Activated CD4-positive, alpha-beta memory T cell treated with anti-CD3 and anti-CD28 coated beads for 36 hours (primary cell): ENCODE measurements at regions of chrX and their contacts with region 1.

Region 1: DNA sequence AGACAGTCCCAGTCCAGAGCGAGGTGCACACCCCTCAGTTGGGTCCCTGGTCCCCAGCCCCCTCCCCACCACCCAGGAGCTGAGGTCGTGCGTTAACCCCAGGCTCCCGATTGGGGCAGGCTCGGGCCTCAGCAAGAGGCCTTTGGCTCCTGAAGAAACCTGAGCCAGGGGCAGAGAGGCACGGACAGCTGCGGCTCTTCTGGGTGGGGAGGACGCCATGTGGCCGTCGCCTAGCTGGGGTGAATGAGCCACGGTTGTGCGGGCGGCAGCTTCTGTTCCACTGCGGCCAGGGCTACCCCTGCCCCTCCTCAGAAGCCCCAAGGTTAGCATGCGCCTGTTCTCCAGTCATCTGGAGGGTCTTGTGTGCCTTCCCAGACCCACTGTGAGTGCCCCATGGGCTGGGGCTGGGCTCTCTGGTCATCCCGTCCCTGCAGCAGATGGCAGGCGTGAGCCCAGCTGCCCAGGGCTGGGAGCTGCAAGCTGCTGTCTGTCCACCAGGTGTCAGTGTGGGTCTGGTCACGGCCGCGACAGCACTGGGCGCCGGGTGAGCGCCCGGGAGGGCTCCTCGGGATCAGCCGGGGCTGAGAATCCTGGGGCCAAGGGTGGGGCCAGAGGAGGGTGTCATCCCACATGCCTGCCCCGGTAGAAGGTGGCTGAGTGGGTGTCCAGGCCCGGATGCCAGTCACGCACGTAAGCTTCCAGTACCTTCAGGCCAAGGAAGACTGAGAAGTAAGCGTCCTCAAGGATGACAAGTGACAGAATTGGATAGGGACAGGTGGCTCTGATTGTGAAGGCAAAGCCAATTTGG is 21.9 kb downstream of the ATP2B3 start:
- DNase-seq: peak; percentile 69
- H3K4me3 Mint-ChIP-seq: no peak overlapping the region
- H3K27ac Mint-ChIP-seq: no peak overlapping the region
- H3K4me1 Mint-ChIP-seq: no peaks in the 10 kb centered on the region
- H3K27me3 Mint-ChIP-seq: peaks cover 2% of the 10 kb centered on the region

Region 2: GRCh38 chrX:153434801-153435200 is 104.6 kb before region 1 on chrX:
- CTCF ChIA-PET with region 1: no interaction called
- POLR2A ChIA-PET with region 1: no interaction called
- intact Hi-C with region 1: no loop called
- DNase-seq: no peak
- H3K4me3 Mint-ChIP-seq: no peak overlapping the region
- H3K27ac Mint-ChIP-seq: no peak overlapping the region
- H3K4me1 Mint-ChIP-seq: no peaks in the 10 kb centered on the region
- H3K27me3 Mint-ChIP-seq: peaks cover 2% of the 10 kb centered on the region

Region 3: GRCh38 chrX:153554519-153555167 is 15.3 kb after region 1 on chrX:
- CTCF ChIA-PET with region 1: interaction called, 10 read pairs
- POLR2A ChIA-PET with region 1: no interaction called
- intact Hi-C with region 1: no loop called
- DNase-seq: peak; percentile 70
- H3K4me3 Mint-ChIP-seq: no peak overlapping the region
- H3K27ac Mint-ChIP-seq: no peak overlapping the region
- H3K4me1 Mint-ChIP-seq: no peaks in the 10 kb centered on the region
- H3K27me3 Mint-ChIP-seq: no peaks in the 10 kb centered on the region